T-cell (primary cell): ENCODE measurements at regions of chr6 and their contacts with region 1.

Region 1: GRCh38 chr6:166989427-166990032 is 9.7 kb upstream of the CEP43 start:
- DNase-seq: peak in 27 of 35 experiments; percentile 14 to 76 (median 43)
- ATAC-seq: peak; percentile 66 to 82 (median 76)
- H3K4me3 ChIP-seq: no peak overlapping the region
- H3K4me3 Mint-ChIP-seq: no peak overlapping the region
- H3K27ac ChIP-seq: no peak overlapping the region
- H3K27ac Mint-ChIP-seq: peak overlapping the region; percentile 61 to 65
- H3K4me1 ChIP-seq: peaks cover 8 to 9% of the 10 kb centered on the region in 2 experiments
- H3K4me1 Mint-ChIP-seq: peaks cover 15 to 31% (median 30%) of the 10 kb centered on the region in 3 donors
- H3K27me3 ChIP-seq: no peaks in the 10 kb centered on the region
- H3K27me3 Mint-ChIP-seq: no peaks in the 10 kb centered on the region

Region 2: GRCh38 chr6:166156942-166157341 is 832.6 kb before region 1 on chr6:
- CTCF ChIA-PET with region 1: no interaction called
- POLR2A ChIA-PET with region 1: no interaction called
- DNase-seq: no peak
- ATAC-seq: no peak
- H3K4me3 ChIP-seq: no peak overlapping the region
- H3K4me3 Mint-ChIP-seq: no peak overlapping the region
- H3K27ac ChIP-seq: no peak overlapping the region
- H3K27ac Mint-ChIP-seq: no peak overlapping the region
- H3K4me1 ChIP-seq: no peaks in the 10 kb centered on the region
- H3K4me1 Mint-ChIP-seq: no peaks in the 10 kb centered on the region
- H3K27me3 ChIP-seq: peaks cover 0 to 31% of the 10 kb centered on the region in 2 experiments
- H3K27me3 Mint-ChIP-seq: peaks cover 4 to 37% of the 10 kb centered on the region in 2 donors

Region 3: DNA sequence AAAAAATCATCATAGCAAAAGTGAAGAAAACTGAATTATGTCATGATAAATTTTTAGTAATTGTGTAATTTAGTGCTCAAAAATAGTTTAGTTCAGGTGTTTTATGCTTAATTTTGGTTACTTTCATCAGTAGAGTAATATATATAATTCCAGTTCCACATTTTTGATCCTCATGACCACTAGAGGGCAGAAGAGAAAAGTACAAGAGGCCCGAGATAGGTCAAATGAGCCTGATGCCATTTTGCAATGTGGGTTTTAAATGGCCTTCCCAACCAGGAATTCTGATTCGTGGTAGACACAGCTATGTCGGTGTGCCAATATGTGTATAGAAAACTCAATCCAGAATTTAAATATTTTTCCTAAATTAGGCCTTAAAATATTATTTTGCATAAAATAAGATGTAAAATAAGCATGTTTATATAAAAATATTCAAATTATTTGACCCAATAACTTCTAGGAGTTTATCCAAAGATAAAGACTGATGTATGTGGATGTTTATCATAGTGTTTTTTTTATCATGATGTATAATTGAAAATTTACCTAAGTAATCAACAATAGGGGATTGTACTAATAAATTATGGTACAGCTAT is 202.7 kb before region 1 on chr6:
- CTCF ChIA-PET with region 1: interaction called, 21 to 38 read pairs
- POLR2A ChIA-PET with region 1: interaction called in 1 of 2 experiments, 4 read pairs
- DNase-seq: peak in 6 of 35 experiments; percentile 3 to 79 (median 19)
- ATAC-seq: peak in 2 of 4 experiments; percentile 46 to 61
- H3K4me3 ChIP-seq: no peak overlapping the region
- H3K4me3 Mint-ChIP-seq: no peak overlapping the region
- H3K27ac ChIP-seq: no peak overlapping the region
- H3K27ac Mint-ChIP-seq: no peak overlapping the region
- H3K4me1 ChIP-seq: no peaks in the 10 kb centered on the region
- H3K4me1 Mint-ChIP-seq: no peaks in the 10 kb centered on the region
- H3K27me3 ChIP-seq: no peaks in the 10 kb centered on the region
- H3K27me3 Mint-ChIP-seq: peaks cover 0 to 5% of the 10 kb centered on the region in 2 donors

Region 4: GRCh38 chr6:166942393-166943168 is 46.9 kb before region 1 on chr6:
- CTCF ChIA-PET with region 1: interaction called, 4 to 17 read pairs
- POLR2A ChIA-PET with region 1: interaction called in 1 of 2 experiments, 3 read pairs
- DNase-seq: peak in 32 of 35 experiments; percentile 26 to 73 (median 50)
- ATAC-seq: peak; percentile 54 to 97 (median 80)
- H3K4me3 ChIP-seq: no peak overlapping the region
- H3K4me3 Mint-ChIP-seq: peak overlapping the region; percentile 19 to 50 (median 43)
- H3K27ac ChIP-seq: peak overlapping the region; percentile 44
- H3K27ac Mint-ChIP-seq: peak overlapping the region; percentile 82 to 92
- H3K4me1 ChIP-seq: peaks cover 0 to 26% of the 10 kb centered on the region in 2 experiments
- H3K4me1 Mint-ChIP-seq: peaks cover 22 to 54% (median 45%) of the 10 kb centered on the region in 3 donors
- H3K27me3 ChIP-seq: no peaks in the 10 kb centered on the region
- H3K27me3 Mint-ChIP-seq: no peaks in the 10 kb centered on the region

Region 5: DNA sequence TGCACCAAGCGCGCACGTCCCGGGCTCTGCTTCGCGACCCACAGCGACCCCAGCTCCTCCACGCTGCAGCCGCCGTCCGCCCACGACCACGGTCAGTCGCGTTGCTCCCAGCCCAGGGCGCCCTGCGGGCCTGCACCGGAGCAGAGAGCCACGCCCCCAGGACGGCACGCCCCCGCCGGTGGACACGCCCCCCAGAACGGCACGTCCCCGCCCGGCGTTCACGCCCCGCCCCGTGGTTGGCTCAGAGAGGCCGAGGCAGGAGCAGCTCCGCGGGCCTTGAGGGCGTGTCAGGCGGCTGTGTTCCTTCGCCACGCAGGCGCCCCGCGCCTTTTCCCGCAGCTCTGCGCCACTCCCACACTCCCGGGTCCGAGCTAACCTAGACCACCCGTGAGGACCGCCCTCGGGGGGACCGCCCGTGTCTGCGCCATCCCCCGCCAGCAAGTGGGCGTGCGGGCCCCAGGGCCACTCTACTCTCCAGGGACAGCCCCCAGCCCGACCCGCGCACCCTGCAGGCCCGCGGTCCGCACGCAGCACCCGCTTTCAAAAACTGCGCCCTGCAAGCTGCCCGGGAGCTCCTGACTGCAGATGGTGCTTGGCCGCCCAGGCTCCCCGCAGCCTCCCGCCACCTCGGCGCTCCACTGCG is 33.0 kb before region 1 on chr6 and contains the start of gene RNASET2:
- CTCF ChIA-PET with region 1: interaction called, 17 to 24 read pairs
- POLR2A ChIA-PET with region 1: interaction called, 3 to 4 read pairs
- DNase-seq: peak; percentile 91 to 100 (median 98)
- ATAC-seq: peak; percentile 82 to 89 (median 86)
- H3K4me3 ChIP-seq: peak within 1 kb of the TSS; percentile 86 to 92
- H3K4me3 Mint-ChIP-seq: peak within 1 kb of the TSS; percentile 92
- H3K27ac ChIP-seq: peak within 1 kb of the TSS; percentile 96
- H3K27ac Mint-ChIP-seq: peak within 1 kb of the TSS; percentile 99
- H3K4me1 ChIP-seq: peaks cover 48 to 82% of the 10 kb centered on the region in 2 experiments
- H3K4me1 Mint-ChIP-seq: peaks cover 68 to 77% (median 76%) of the 10 kb centered on the region in 3 donors
- H3K27me3 ChIP-seq: no peaks in the 10 kb centered on the region
- H3K27me3 Mint-ChIP-seq: no peaks in the 10 kb centered on the region
- total RNA-seq, gene RNASET2: 121 to 275 (median 252) TPM

Region 6: DNA sequence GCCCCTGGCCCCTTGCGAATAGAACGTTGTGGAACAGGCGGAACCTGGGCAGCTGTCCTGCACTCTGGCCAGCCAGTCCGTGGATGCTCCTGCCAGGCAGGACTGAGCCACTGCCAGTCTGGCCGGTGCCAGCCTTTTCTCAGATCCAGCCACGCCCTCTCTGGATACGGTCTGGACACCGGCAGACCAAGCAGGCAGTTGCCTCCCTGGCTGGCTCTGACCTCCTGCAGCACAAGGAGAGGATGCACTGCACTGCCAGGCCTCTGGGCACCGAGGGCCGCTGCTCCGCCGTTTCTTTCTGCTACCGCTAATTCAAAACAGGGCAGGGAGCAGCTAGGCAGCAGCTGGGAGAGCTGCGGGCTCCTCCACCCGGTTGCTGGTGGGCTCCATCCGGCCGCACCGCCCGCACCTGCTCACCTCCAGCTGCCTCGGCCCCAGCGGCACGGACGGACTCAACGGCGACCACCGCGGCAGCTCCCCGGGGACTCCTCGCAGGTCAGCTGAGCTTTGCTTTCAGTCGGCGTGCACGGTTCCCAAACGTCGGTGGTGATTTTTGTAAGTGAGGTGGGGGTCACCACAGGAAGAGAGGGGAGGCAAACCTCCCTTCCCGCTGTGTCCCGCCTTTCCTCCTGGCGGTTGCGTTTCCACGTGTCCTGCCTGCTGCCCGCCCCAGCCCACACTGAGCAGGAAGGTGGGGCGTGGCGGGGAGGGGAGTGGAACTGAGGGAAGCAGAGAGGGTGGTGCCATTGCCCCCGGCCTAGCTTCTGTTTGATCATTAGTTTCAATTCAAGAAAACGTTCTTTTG is 806.9 kb after region 1 on chr6:
- CTCF ChIA-PET with region 1: no interaction called
- POLR2A ChIA-PET with region 1: no interaction called
- DNase-seq: no peak
- ATAC-seq: peak in 1 of 4 experiments; percentile 35
- H3K4me3 ChIP-seq: peak overlapping the region in 1 of 2 donors; percentile 40
- H3K4me3 Mint-ChIP-seq: peak overlapping the region; percentile 10 to 68 (median 31)
- H3K27ac ChIP-seq: no peak overlapping the region
- H3K27ac Mint-ChIP-seq: no peak overlapping the region
- H3K4me1 ChIP-seq: peaks cover 0 to 13% of the 10 kb centered on the region in 2 experiments
- H3K4me1 Mint-ChIP-seq: peaks cover 7 to 17% (median 7%) of the 10 kb centered on the region in 3 donors
- H3K27me3 ChIP-seq: peaks cover 16 to 54% of the 10 kb centered on the region in 2 experiments
- H3K27me3 Mint-ChIP-seq: peaks cover 48 to 66% of the 10 kb centered on the region in 2 donors